Left cardiac atrium (tissue), 4 donors: ENCODE measurements at regions of chr4 and their contacts with region 1.

Region 1: GRCh38 chr4:158768555-158769174 is at the start of gene FNIP2:
- DNase-seq: peak; percentile 89
- ATAC-seq: peak; percentile 95 to 97
- total RNA-seq, gene FNIP2: 40.6 to 55.3 TPM

Region 2: GRCh38 chr4:158578476-158578875 is 190.2 kb before region 1 on chr4:
- intact Hi-C with region 1: no loop called
- DNase-seq: no peak
- ATAC-seq: no peak

Region 3: GRCh38 chr4:158809611-158810486 is 41.2 kb after region 1 on chr4:
- intact Hi-C with region 1: loop called in 1 of 2 experiments (anchors 5 kb)
- DNase-seq: no peak
- ATAC-seq: peak; percentile 27 to 67

Region 4: DNA sequence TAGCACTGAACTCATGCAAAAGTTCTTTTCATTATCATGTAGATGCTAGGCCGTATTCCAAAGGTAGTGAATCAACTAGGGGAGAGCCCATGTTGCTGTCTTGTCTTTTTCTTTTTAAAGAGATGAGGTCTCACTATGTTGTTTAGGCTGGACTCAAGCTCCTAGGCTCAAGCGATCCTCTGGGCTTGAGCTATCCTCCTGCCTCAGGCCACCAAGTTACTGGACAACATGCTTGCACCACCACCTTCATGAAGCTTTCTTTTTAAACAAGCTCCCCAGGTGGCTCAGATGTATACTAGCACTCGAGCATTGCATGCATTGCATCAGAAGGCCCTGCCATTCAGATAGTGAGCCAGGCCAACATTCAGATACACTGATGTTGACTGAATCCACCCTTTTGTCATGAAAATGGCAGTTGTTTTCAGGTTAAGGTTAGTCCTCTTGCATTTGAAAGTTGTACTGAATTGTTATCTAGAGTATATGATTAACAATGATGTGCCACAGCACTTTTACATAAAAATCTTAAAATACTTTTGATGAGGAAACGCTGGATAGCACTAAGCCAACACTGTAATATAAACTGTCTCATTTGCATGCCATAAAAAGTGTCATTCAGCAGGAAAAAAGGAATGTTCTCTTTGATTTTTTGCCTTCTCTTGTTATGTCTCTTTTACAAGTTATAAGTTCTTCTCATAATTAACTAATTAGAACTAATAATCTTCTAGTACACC is 76.8 kb after region 1 on chr4:
- intact Hi-C with region 1: loop called (anchors 5 kb)
- DNase-seq: no peak
- ATAC-seq: no peak